Caco-2 (cell line): ENCODE measurements at regions of chr16 and their contacts with region 1.

Region 1: DNA sequence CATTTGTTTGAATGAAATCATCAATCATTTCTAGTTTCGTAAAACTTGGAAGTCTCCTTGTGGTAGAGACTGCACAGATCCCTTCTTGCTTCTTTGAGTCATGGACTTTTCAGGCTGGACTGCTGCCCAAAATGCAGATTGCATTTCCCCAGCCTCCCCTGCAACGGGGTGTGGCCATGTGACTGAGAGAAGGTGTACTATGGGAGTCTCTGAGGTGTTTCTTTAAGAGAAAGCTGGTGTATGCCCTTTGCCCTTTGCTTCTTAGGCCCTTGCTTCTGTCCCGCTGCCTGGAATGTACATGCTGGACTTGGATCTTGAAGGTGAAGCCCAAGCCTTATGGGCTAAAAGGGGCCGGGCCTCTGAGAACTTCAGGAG is 51.6 kb downstream of the FTO start:
- DNase-seq: peak; percentile 64 to 85
- H3K4me3 ChIP-seq: no peak overlapping the region
- H3K4me3 Mint-ChIP-seq: peak overlapping the region; percentile 17
- H3K27ac Mint-ChIP-seq: peak overlapping the region; percentile 82
- H3K4me1 ChIP-seq: peaks cover 42% of the 10 kb centered on the region
- H3K4me1 Mint-ChIP-seq: peaks cover 50% of the 10 kb centered on the region
- H3K27me3 ChIP-seq: no peaks in the 10 kb centered on the region
- H3K27me3 Mint-ChIP-seq: no peaks in the 10 kb centered on the region
- CTCF ChIP-seq: no peak

Region 2: DNA sequence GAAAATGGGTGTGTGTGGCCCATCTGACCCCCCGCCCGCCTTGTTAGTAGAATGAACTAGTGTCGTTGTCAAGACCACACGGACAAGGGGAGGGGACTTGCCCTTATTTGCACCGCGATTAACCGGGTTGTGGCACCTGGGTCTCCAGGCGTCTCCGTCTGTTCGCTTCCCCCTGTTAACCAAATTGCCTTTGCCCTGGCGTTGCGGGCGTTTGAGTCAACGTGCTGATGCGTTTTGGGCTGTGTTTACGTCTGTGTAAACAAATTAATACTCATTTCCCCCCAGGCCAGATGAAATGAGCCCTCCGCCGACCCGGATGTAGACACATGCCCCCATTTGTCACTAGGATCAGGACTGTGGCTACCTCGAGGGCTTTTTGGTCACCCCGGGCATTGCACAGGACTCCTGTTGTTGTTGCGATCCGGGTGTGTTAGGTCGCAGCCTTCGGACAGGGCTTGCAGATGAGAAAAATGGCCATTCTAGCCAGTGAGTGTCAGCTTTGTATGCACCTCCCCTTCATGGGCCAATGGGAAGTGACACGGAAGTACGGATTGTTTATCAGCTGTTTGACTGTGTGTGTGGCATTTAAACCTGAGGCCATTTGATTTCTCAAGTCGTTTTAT is 320.3 kb before region 1 on chr16:
- CTCF ChIA-PET with region 1: no interaction called
- POLR2A ChIA-PET with region 1: no interaction called
- intact Hi-C with region 1: no loop called
- DNase-seq: peak; percentile 85 to 88
- H3K4me3 ChIP-seq: peak overlapping the region; percentile 99
- H3K4me3 Mint-ChIP-seq: peak overlapping the region; percentile 99
- H3K27ac Mint-ChIP-seq: peak overlapping the region; percentile 96
- H3K4me1 ChIP-seq: peaks cover 17% of the 10 kb centered on the region
- H3K4me1 Mint-ChIP-seq: peaks cover 18% of the 10 kb centered on the region
- H3K27me3 ChIP-seq: no peaks in the 10 kb centered on the region
- H3K27me3 Mint-ChIP-seq: no peaks in the 10 kb centered on the region
- CTCF ChIP-seq: no peak

Region 3: GRCh38 chr16:53651357-53651756 is 104.2 kb before region 1 on chr16:
- CTCF ChIA-PET with region 1: no interaction called
- POLR2A ChIA-PET with region 1: no interaction called
- intact Hi-C with region 1: no loop called
- DNase-seq: no peak
- H3K4me3 ChIP-seq: no peak overlapping the region
- H3K4me3 Mint-ChIP-seq: no peak overlapping the region
- H3K27ac Mint-ChIP-seq: no peak overlapping the region
- H3K4me1 ChIP-seq: peaks cover 12% of the 10 kb centered on the region
- H3K4me1 Mint-ChIP-seq: peaks cover 23% of the 10 kb centered on the region
- H3K27me3 ChIP-seq: no peaks in the 10 kb centered on the region
- H3K27me3 Mint-ChIP-seq: no peaks in the 10 kb centered on the region
- CTCF ChIP-seq: no peak

Region 4: GRCh38 chr16:53692142-53692541 is 63.4 kb before region 1 on chr16:
- CTCF ChIA-PET with region 1: interaction called, 10 read pairs
- POLR2A ChIA-PET with region 1: no interaction called
- intact Hi-C with region 1: no loop called
- DNase-seq: peak; percentile 58 to 73
- H3K4me3 ChIP-seq: no peak overlapping the region
- H3K4me3 Mint-ChIP-seq: no peak overlapping the region
- H3K27ac Mint-ChIP-seq: no peak overlapping the region
- H3K4me1 ChIP-seq: peaks cover 3% of the 10 kb centered on the region; the same call in 1 of the 2 replicates
- H3K4me1 Mint-ChIP-seq: no peaks in the 10 kb centered on the region
- H3K27me3 ChIP-seq: no peaks in the 10 kb centered on the region
- H3K27me3 Mint-ChIP-seq: no peaks in the 10 kb centered on the region
- CTCF ChIP-seq: peak; percentile 74 to 75

Region 5: DNA sequence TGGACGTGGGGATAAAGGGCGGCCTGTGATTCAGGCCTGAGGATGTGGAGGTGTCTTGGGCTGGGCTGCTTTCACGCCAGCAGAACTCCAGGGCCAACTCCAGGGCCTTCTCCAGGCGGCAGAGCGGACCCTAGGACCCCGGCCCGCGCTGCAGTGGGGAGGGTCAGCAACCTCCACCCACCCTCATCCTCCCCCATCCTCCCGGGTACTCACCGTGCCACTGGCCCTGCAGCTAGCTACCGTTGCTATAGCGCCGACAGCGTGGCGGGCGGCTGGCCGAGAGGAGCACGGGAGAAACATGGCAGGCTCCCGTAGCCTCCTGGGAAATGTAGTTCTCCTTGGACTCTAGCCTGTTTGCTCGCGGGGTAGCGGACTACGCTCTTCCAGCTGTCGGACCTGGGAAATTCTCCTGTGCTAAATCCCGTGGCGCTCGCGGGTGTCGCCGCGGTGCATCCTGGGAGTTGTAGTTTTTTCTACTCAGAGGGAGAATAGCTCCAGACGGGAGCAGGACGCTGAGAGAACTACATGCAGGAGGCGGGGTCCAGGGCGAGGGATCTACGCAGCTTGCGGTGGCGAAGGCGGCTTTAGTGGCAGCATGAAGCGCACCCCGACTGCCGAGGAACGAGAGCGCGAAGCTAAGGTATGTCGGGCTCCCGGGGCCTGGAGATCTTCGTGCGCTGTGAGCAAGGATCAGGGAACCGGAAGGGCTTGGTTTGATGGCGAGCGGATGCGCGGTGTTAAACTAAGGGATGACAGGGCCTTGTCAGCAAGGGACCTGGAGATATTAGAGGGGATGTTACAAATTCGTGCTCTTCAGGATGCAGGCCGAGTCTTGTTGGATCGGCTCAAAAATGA is 51.7 kb before region 1 on chr16 and contains the starts of genes FTO and RPGRIP1L:
- CTCF ChIA-PET with region 1: interaction called, 3 read pairs
- POLR2A ChIA-PET with region 1: no interaction called
- intact Hi-C with region 1: loop called (anchors 5 kb)
- DNase-seq: peak; percentile 100
- H3K4me3 ChIP-seq: peak within 1 kb of the TSS; percentile 82
- H3K4me3 Mint-ChIP-seq: peak within 1 kb of the TSS; percentile 89
- H3K27ac Mint-ChIP-seq: peak within 1 kb of the TSS; percentile 72
- H3K4me1 ChIP-seq: peaks cover 8% of the 10 kb centered on the region; the same call in 1 of the 2 replicates
- H3K4me1 Mint-ChIP-seq: no peaks in the 10 kb centered on the region
- H3K27me3 ChIP-seq: no peaks in the 10 kb centered on the region
- H3K27me3 Mint-ChIP-seq: no peaks in the 10 kb centered on the region
- CTCF ChIP-seq: no peak
- total RNA-seq, gene FTO: 76.3 and 78.3 TPM in 2 replicates
- total RNA-seq, gene RPGRIP1L: 16.1 and 17.8 TPM in 2 replicates

Region 6: DNA sequence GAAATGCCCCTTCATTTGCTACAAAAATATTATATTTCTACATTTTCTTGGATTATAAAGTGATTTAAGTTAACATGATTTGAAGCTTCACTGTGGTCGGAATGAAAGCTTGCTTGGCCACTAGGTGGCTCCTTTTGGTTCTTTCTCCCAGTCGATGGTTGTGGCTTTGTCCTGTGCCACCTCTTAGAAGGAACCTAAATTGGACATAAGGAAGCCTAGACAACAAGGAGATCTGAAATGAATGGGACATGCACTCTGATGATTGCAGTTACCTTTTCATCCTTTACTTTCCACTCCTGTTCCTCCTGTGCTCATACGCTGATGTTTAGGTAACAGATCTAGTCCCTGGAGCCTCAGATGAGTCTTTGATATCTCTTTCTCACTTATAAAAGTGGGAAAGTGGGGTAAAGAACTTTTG is 12.4 kb before region 1 on chr16:
- CTCF ChIA-PET with region 1: interaction called, 37 read pairs
- POLR2A ChIA-PET with region 1: no interaction called
- intact Hi-C with region 1: no loop called
- DNase-seq: peak in 1 of 2 experiments; percentile 52
- H3K4me3 ChIP-seq: no peak overlapping the region
- H3K4me3 Mint-ChIP-seq: no peak overlapping the region
- H3K27ac Mint-ChIP-seq: no peak overlapping the region
- H3K4me1 ChIP-seq: peaks cover 19% of the 10 kb centered on the region
- H3K4me1 Mint-ChIP-seq: peaks cover 31% of the 10 kb centered on the region
- H3K27me3 ChIP-seq: no peaks in the 10 kb centered on the region
- H3K27me3 Mint-ChIP-seq: no peaks in the 10 kb centered on the region
- CTCF ChIP-seq: peak; percentile 75 to 78

Region 7: GRCh38 chr16:53792161-53792951 is 36.8 kb after region 1 on chr16:
- CTCF ChIA-PET with region 1: no interaction called
- POLR2A ChIA-PET with region 1: no interaction called
- intact Hi-C with region 1: no loop called
- DNase-seq: peak; percentile 48 to 51
- H3K4me3 ChIP-seq: no peak overlapping the region
- H3K4me3 Mint-ChIP-seq: peak overlapping the region; percentile 33
- H3K27ac Mint-ChIP-seq: peak overlapping the region; percentile 72
- H3K4me1 ChIP-seq: peaks cover 21% of the 10 kb centered on the region
- H3K4me1 Mint-ChIP-seq: peaks cover 34% of the 10 kb centered on the region
- H3K27me3 ChIP-seq: no peaks in the 10 kb centered on the region
- H3K27me3 Mint-ChIP-seq: no peaks in the 10 kb centered on the region
- CTCF ChIP-seq: no peak